CD4-positive, alpha-beta memory T cell (primary cell): ENCODE measurements at regions of chr5 and their contacts with region 1.

Region 1: DNA sequence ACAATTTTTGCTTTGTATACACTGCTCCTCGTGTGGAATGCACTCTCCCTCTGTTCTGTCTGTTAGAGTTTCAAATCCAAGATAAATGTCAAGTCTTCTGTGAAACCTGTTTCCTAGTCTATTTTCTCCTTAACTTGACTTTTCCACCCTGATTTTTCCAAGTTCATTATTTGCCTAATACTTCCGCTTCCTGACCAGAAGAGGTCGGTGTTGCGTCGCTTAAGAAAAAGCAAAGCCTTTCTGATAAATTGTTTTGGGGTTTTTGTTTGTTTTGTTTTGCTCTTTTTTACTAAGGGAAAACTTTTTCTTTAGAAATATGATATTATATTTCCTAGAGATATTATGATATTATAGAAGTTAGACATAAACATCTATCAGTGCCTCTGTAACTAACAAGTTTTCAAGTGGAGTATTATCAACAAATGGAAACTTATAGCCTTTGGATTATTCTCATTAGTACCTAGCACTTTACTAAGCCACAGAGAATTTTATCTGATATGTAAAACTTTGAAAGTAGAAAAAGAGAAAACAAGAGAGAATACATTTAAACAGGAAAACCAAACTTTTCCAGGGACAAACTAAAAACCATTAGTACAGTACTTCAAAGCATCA is 55.8 kb downstream of the PHAX start:
- DNase-seq: peak in 4 of 5 donors; percentile 22 to 31 (median 26)
- H3K4me3 ChIP-seq: no peak overlapping the region
- H3K4me3 Mint-ChIP-seq: no peak overlapping the region
- H3K27ac ChIP-seq: no peak overlapping the region
- H3K27ac Mint-ChIP-seq: peak overlapping the region in 2 of 7 donors; percentile 1 to 53
- H3K4me1 ChIP-seq: no peaks in the 10 kb centered on the region
- H3K4me1 Mint-ChIP-seq: no peaks in the 10 kb centered on the region
- H3K27me3 ChIP-seq: peaks cover 4% of the 10 kb centered on the region
- H3K27me3 Mint-ChIP-seq: peaks cover 1 to 2% of the 10 kb centered on the region in 2 donors

Region 2: GRCh38 chr5:126552614-126553013 is 103.9 kb before region 1 on chr5:
- CTCF ChIA-PET with region 1: no interaction called
- POLR2A ChIA-PET with region 1: no interaction called
- intact Hi-C with region 1: no loop called
- DNase-seq: no peak
- H3K4me3 ChIP-seq: no peak overlapping the region
- H3K4me3 Mint-ChIP-seq: no peak overlapping the region
- H3K27ac ChIP-seq: no peak overlapping the region
- H3K27ac Mint-ChIP-seq: no peak overlapping the region
- H3K4me1 ChIP-seq: no peaks in the 10 kb centered on the region
- H3K4me1 Mint-ChIP-seq: no peaks in the 10 kb centered on the region
- H3K27me3 ChIP-seq: no peaks in the 10 kb centered on the region
- H3K27me3 Mint-ChIP-seq: no peaks in the 10 kb centered on the region

Region 3: GRCh38 chr5:126801992-126802294 is 145.4 kb after region 1 on chr5:
- CTCF ChIA-PET with region 1: interaction called, 18 read pairs
- POLR2A ChIA-PET with region 1: no interaction called
- intact Hi-C with region 1: no loop called
- DNase-seq: peak in 3 of 5 donors; percentile 19 to 22 (median 19)
- H3K4me3 ChIP-seq: no peak overlapping the region
- H3K4me3 Mint-ChIP-seq: no peak overlapping the region
- H3K27ac ChIP-seq: no peak overlapping the region
- H3K27ac Mint-ChIP-seq: peak overlapping the region in 3 of 7 donors; percentile 10 to 36 (median 19)
- H3K4me1 ChIP-seq: no peaks in the 10 kb centered on the region
- H3K4me1 Mint-ChIP-seq: peaks cover 24 to 49% (median 30%) of the 10 kb centered on the region in 4 donors
- H3K27me3 ChIP-seq: no peaks in the 10 kb centered on the region
- H3K27me3 Mint-ChIP-seq: no peaks in the 10 kb centered on the region

Region 4: DNA sequence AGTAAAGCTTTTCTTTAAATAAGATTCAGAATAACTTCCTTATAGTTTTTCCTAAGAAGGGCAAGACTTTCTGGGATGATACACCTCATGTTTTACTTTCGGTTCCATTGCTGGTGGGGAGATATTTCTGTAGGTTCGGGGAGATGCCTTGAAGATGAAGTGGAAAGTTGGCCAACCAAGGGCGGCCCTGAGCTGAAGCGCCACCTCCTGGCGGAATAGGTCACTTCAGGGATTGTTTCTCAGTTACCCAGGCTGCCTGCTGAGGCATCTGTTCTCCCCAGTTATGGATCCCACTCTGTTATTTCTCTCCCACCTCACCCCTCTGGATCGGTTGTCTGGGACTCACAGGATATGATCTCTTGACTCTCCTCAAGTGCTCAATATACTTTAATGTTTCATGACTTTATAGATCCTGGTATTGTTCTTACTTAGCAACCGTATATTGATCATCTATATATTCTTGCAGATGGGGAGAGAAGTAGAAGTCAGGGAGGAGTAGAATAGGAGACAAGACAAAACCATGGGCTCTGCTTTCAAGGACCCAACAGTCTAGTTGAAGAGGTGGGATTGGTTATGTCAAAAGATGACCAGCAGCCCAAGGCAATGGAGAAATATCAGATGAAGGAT is 657.5 kb after region 1 on chr5:
- CTCF ChIA-PET with region 1: interaction called, 29 read pairs
- POLR2A ChIA-PET with region 1: no interaction called
- intact Hi-C with region 1: loop called (anchors 1 kb)
- DNase-seq: peak in 4 of 5 donors; percentile 38 to 55 (median 54)
- H3K4me3 ChIP-seq: no peak overlapping the region
- H3K4me3 Mint-ChIP-seq: peak overlapping the region in 1 of 8 donors; percentile 50
- H3K27ac ChIP-seq: no peak overlapping the region
- H3K27ac Mint-ChIP-seq: peak overlapping the region in 1 of 7 donors; percentile 81
- H3K4me1 ChIP-seq: no peaks in the 10 kb centered on the region
- H3K4me1 Mint-ChIP-seq: peaks cover 0 to 4% (median under 1%) of the 10 kb centered on the region in 4 donors
- H3K27me3 ChIP-seq: no peaks in the 10 kb centered on the region
- H3K27me3 Mint-ChIP-seq: peaks cover 5 to 9% of the 10 kb centered on the region in 2 donors

Region 5: GRCh38 chr5:127492854-127493738 is 836.6 kb after region 1 on chr5:
- CTCF ChIA-PET with region 1: interaction called, 7 read pairs
- POLR2A ChIA-PET with region 1: no interaction called
- intact Hi-C with region 1: loop called (anchors 2 kb)
- DNase-seq: peak in 4 of 5 donors; percentile 38 to 54 (median 50)
- H3K4me3 ChIP-seq: no peak overlapping the region
- H3K4me3 Mint-ChIP-seq: no peak overlapping the region
- H3K27ac ChIP-seq: no peak overlapping the region
- H3K27ac Mint-ChIP-seq: no peak overlapping the region
- H3K4me1 ChIP-seq: no peaks in the 10 kb centered on the region
- H3K4me1 Mint-ChIP-seq: peaks cover 0 to 2% (median 0%) of the 10 kb centered on the region in 4 donors
- H3K27me3 ChIP-seq: no peaks in the 10 kb centered on the region
- H3K27me3 Mint-ChIP-seq: peaks cover 9 to 17% of the 10 kb centered on the region in 2 donors

Region 6: GRCh38 chr5:127934791-127935256 is 1278.3 kb after region 1 on chr5:
- CTCF ChIA-PET with region 1: no interaction called
- POLR2A ChIA-PET with region 1: no interaction called
- intact Hi-C with region 1: no loop called
- DNase-seq: no peak
- H3K4me3 ChIP-seq: no peak overlapping the region
- H3K4me3 Mint-ChIP-seq: no peak overlapping the region
- H3K27ac ChIP-seq: no peak overlapping the region
- H3K27ac Mint-ChIP-seq: peak overlapping the region in 1 of 7 donors; percentile 9
- H3K4me1 ChIP-seq: no peaks in the 10 kb centered on the region
- H3K4me1 Mint-ChIP-seq: peaks cover 0 to 4% (median 0%) of the 10 kb centered on the region in 4 donors
- H3K27me3 ChIP-seq: no peaks in the 10 kb centered on the region
- H3K27me3 Mint-ChIP-seq: no peaks in the 10 kb centered on the region